ENCODE measurements at regions of chr14 and their contacts with region 1.

Region 1: DNA sequence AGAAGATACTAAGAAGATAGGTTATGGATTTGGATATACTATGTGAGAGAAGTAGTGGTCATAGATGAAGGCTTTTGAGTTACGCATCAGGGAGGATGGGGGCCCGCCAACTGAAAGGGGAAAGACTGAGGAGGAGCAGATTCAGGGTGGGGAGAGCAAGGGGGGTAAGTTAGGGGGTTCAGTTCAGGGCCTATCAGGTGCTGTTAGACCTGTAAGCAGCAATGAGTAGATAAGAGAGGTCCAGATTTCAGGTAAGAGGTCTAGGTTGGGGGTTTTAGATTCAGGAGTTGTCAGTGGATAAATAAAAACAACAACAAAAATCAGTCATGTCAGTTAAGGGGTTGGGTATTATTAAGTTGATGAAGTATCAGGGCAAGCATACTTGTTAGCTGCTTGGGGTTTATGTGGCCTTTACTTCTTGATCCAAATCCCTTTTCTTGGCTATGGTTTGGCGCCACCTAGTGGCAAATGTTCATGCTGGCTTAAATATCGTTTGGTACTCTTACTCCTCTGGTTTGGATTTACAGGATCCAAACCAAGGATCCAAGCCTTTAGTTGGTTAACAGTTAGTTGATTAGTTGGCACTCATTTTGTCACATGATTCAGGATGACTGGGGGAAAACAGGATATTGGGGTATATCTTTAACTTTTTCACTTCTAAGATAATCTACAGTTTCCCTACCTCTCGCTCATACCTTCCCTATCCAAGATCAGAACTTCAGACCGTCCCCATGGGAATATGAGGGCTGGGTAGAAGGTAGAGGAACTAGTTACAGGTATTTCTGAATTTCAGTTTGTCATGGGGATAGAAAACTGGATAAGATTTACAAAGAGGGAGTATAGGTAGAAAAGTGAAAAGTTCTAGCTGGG is 65.1 kb downstream of the PCNX1 start:
- DNase-seq: peak; percentile 79
- ATAC-seq: peak; percentile 90

Region 2: GRCh38 chr14:70821584-70822529 is 150.5 kb before region 1 on chr14:
- intact Hi-C with region 1: loop called (anchors 1 kb)
- DNase-seq: peak; percentile 77
- ATAC-seq: peak; percentile 50

Region 3: GRCh38 chr14:70842851-70843462 is 129.4 kb before region 1 on chr14:
- intact Hi-C with region 1: no loop called
- DNase-seq: no peak
- ATAC-seq: peak; percentile 75

Region 4: GRCh38 chr14:70907176-70907995 is 65.0 kb before region 1 on chr14 and contains the start of gene PCNX1:
- intact Hi-C with region 1: loop called (anchors 2 kb)
- DNase-seq: peak; percentile 96
- ATAC-seq: peak; percentile 91
- total RNA-seq, gene PCNX1: 33.6 TPM